Naive thymus-derived CD4-positive, alpha-beta T cell (primary cell): ENCODE measurements at regions of chr14 and their contacts with region 1.

Region 1: GRCh38 chr14:98227000-98227726 is 1044.8 kb downstream of the BCL11B start:
- DNase-seq: peak in 4 of 9 donors; percentile 33 to 57 (median 38)
- ATAC-seq: no peak
- H3K4me3 ChIP-seq: peak overlapping the region; percentile 28
- H3K4me3 Mint-ChIP-seq: peak overlapping the region; percentile 51 to 85 (median 68)
- H3K27ac ChIP-seq: peak overlapping the region; percentile 83
- H3K27ac Mint-ChIP-seq: peak overlapping the region; percentile 92 to 100 (median 96)
- H3K4me1 ChIP-seq: peaks cover 35 to 90% of the 10 kb centered on the region in 2 donors
- H3K4me1 Mint-ChIP-seq: peaks cover 48 to 96% (median 91%) of the 10 kb centered on the region in 7 donors
- H3K27me3 ChIP-seq: no peaks in the 10 kb centered on the region
- H3K27me3 Mint-ChIP-seq: no peaks in the 10 kb centered on the region

Region 2: GRCh38 chr14:98120831-98121464 is 106.2 kb before region 1 on chr14:
- CTCF ChIA-PET with region 1: no interaction called
- POLR2A ChIA-PET with region 1: no interaction called
- intact Hi-C with region 1: no loop called
- DNase-seq: no peak
- ATAC-seq: no peak
- H3K4me3 ChIP-seq: no peak overlapping the region
- H3K4me3 Mint-ChIP-seq: no peak overlapping the region
- H3K27ac ChIP-seq: no peak overlapping the region
- H3K27ac Mint-ChIP-seq: no peak overlapping the region
- H3K4me1 ChIP-seq: peaks cover 0 to 4% of the 10 kb centered on the region in 2 donors
- H3K4me1 Mint-ChIP-seq: peaks cover 0 to 11% (median 7%) of the 10 kb centered on the region in 7 donors
- H3K27me3 ChIP-seq: no peaks in the 10 kb centered on the region
- H3K27me3 Mint-ChIP-seq: no peaks in the 10 kb centered on the region

Region 3: GRCh38 chr14:98144964-98145363 is 82.2 kb before region 1 on chr14:
- CTCF ChIA-PET with region 1: interaction called, 7 read pairs
- POLR2A ChIA-PET with region 1: interaction called, 17 read pairs
- intact Hi-C with region 1: loop called in 1 of 2 experiments (anchors 1 kb)
- DNase-seq: no peak
- ATAC-seq: no peak
- H3K4me3 ChIP-seq: no peak overlapping the region
- H3K4me3 Mint-ChIP-seq: peak overlapping the region in 5 of 10 donors; percentile 1 to 60 (median 36)
- H3K27ac ChIP-seq: no peak overlapping the region
- H3K27ac Mint-ChIP-seq: peak overlapping the region in 8 of 9 donors; percentile 49 to 99 (median 90)
- H3K4me1 ChIP-seq: peaks cover 31 to 48% of the 10 kb centered on the region in 2 donors
- H3K4me1 Mint-ChIP-seq: peaks cover 38 to 86% (median 72%) of the 10 kb centered on the region in 7 donors
- H3K27me3 ChIP-seq: no peaks in the 10 kb centered on the region
- H3K27me3 Mint-ChIP-seq: no peaks in the 10 kb centered on the region

Region 4: GRCh38 chr14:98189062-98189461 is 38.1 kb before region 1 on chr14:
- CTCF ChIA-PET with region 1: interaction called, 4 read pairs
- POLR2A ChIA-PET with region 1: interaction called, 13 read pairs
- intact Hi-C with region 1: loop called (anchors 1 kb)
- DNase-seq: peak in 1 of 9 donors; percentile 50
- ATAC-seq: peak; percentile 40
- H3K4me3 ChIP-seq: peak overlapping the region; percentile 48
- H3K4me3 Mint-ChIP-seq: peak overlapping the region; percentile 63 to 86 (median 76)
- H3K27ac ChIP-seq: peak overlapping the region; percentile 80
- H3K27ac Mint-ChIP-seq: peak overlapping the region; percentile 92 to 100 (median 98)
- H3K4me1 ChIP-seq: peaks cover 82 to 95% of the 10 kb centered on the region in 2 donors
- H3K4me1 Mint-ChIP-seq: peaks cover 56 to 100% (median 98%) of the 10 kb centered on the region in 7 donors
- H3K27me3 ChIP-seq: no peaks in the 10 kb centered on the region
- H3K27me3 Mint-ChIP-seq: no peaks in the 10 kb centered on the region

Region 5: DNA sequence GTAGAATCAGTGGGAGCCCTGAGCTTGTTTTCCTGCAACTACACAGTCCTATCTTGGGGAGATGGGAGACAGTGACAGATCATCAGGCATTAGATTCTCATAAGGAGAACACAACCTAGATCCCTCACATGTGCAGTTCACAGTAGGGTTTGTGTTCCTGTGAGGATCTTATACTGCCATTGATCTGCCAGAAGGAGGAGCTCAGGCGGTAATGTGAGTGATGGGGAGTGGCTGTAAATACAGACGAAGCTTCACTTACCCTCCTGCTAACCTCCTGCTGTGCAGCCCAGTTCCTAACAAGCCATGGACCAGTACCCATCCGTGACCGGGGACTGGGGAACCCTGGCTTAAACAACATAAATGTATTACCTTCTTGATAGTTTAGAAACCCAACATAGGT is 10.8 kb after region 1 on chr14:
- CTCF ChIA-PET with region 1: interaction called, 4 read pairs
- POLR2A ChIA-PET with region 1: interaction called, 9 read pairs
- intact Hi-C with region 1: loop called in 1 of 2 experiments (anchors 2 kb)
- DNase-seq: peak in 5 of 9 donors; percentile 14 to 31 (median 18)
- ATAC-seq: no peak
- H3K4me3 ChIP-seq: no peak overlapping the region
- H3K4me3 Mint-ChIP-seq: peak overlapping the region in 5 of 10 donors; percentile 18 to 29 (median 25)
- H3K27ac ChIP-seq: no peak overlapping the region
- H3K27ac Mint-ChIP-seq: peak overlapping the region in 8 of 9 donors; percentile 44 to 88 (median 72)
- H3K4me1 ChIP-seq: peaks cover 0 to 24% of the 10 kb centered on the region in 2 donors
- H3K4me1 Mint-ChIP-seq: peaks cover 26 to 89% (median 73%) of the 10 kb centered on the region in 7 donors
- H3K27me3 ChIP-seq: no peaks in the 10 kb centered on the region
- H3K27me3 Mint-ChIP-seq: no peaks in the 10 kb centered on the region

Region 6: DNA sequence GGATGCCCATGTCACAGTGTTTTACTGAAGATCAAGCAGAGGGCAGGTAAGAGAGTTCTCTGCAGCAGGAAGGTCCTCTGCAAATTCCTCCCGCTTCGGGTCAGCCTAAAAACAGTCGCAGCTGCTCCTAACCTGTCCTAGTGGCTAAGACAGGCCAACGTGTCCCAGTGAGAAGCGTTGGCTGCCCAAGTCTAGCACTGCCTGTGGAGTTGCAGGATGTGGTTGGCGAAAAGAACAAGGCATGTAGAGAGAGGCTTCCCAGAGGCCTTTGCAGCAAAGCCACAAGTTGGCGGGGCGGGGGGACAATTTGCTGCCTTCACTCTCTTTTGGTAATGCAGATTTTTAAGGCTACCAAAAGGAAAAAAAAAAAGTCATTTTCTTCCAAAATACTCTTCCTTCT is 704.7 kb after region 1 on chr14:
- CTCF ChIA-PET with region 1: no interaction called
- POLR2A ChIA-PET with region 1: interaction called, 4 read pairs
- intact Hi-C with region 1: loop called in 1 of 2 experiments (anchors 10 kb)
- DNase-seq: peak; percentile 31 to 90 (median 88)
- ATAC-seq: peak; percentile 97
- H3K4me3 ChIP-seq: peak overlapping the region; percentile 40
- H3K4me3 Mint-ChIP-seq: peak overlapping the region; percentile 66 to 92 (median 80)
- H3K27ac ChIP-seq: peak overlapping the region; percentile 66
- H3K27ac Mint-ChIP-seq: peak overlapping the region; percentile 82 to 98 (median 94)
- H3K4me1 ChIP-seq: peaks cover 31 to 76% of the 10 kb centered on the region in 2 donors
- H3K4me1 Mint-ChIP-seq: peaks cover 51 to 100% (median 99%) of the 10 kb centered on the region in 7 donors
- H3K27me3 ChIP-seq: no peaks in the 10 kb centered on the region
- H3K27me3 Mint-ChIP-seq: peaks cover 0 to 2% (median 0%) of the 10 kb centered on the region in 5 donors

Region 7: DNA sequence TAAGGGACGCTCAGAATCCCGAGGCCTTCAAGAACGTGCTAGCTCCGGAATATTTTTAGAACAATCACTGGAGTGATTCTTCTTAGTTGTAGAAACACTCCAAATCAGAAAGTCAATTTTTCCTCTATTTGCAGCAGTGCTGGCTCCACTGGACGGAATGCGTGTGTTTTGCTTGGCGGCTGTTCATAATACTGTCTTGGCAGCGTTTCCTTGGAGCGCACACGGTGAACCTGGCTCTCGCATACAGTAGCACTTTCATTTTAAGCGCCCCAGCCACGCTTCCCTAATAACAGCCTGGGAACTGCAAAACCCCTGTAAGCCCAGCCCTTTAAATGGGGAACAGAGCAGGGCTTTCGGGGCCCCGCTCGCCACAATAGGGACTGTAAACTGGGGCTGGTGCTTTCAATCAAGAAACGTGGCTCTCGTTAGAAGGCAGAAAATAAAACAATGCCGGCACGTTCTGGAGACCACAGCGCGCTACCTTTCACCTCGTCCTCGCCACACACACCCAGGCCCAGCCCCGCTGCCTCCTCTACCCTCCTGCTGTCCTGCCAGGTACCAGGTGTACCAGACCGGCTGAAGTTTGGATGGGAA is 965.0 kb after region 1 on chr14:
- CTCF ChIA-PET with region 1: no interaction called
- POLR2A ChIA-PET with region 1: interaction called, 5 read pairs
- intact Hi-C with region 1: loop called (anchors 5 to 10 kb)
- DNase-seq: peak in 3 of 9 donors; percentile 45 to 64 (median 49)
- ATAC-seq: peak; percentile 28
- H3K4me3 ChIP-seq: peak overlapping the region; percentile 61
- H3K4me3 Mint-ChIP-seq: peak overlapping the region; percentile 85 to 94 (median 90)
- H3K27ac ChIP-seq: peak overlapping the region; percentile 85
- H3K27ac Mint-ChIP-seq: peak overlapping the region; percentile 93 to 100 (median 98)
- H3K4me1 ChIP-seq: peaks cover 84 to 85% of the 10 kb centered on the region in 2 donors
- H3K4me1 Mint-ChIP-seq: peaks cover 55 to 97% (median 93%) of the 10 kb centered on the region in 7 donors
- H3K27me3 ChIP-seq: no peaks in the 10 kb centered on the region
- H3K27me3 Mint-ChIP-seq: no peaks in the 10 kb centered on the region